ENCODE measurements at regions of chr7 and their contacts with region 1.

Region 1: DNA sequence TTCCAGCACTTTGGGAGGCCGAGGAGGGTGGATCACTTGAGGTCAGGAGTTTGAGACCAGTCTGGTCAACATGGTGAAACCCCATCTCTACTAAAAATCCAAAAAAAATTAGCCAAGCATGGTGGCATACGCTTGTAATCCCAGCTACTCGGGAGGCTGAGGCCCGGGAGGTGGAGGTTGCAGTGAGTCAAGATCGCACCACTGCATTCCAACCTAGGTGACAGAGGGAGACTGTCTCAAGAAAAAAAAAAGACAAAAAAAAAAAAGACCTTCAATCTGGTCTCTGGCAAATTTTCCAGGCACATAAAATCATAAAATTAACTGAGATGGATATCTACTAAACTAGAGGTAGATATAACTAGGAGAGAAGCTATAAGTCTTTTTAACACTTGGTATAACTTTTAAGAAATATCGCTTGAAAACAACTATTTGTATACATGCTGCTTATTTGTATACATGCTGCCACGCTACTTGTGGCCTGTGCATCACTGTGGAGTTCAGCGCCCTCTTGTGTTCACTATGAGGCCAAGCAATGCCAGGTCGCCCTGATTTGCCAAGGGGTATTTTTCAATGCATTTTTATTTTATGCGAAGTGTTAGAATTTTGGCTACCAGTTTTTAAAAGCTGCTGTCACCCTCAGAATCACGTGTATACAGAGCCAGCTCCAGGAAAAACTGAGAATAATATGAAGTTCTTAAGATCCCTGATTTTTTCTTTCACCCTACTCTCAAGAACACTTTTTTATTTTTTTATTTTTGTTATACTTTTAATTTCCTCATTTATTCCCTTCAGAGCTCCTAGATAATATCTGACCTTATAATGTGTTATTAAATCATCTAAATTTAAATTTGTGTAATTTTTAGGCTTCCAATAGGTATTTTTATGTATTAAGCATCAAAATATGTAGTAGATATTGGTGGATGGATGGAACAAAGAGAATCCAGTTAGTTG is 26.7 kb downstream of the CYCS start:
- DNase-seq: peak; percentile 39
- H3K4me3 ChIP-seq: no peak overlapping the region
- H3K27ac ChIP-seq: no peak overlapping the region
- H3K27me3 ChIP-seq: peaks cover 3% of the 10 kb centered on the region
- CTCF ChIP-seq: peak; percentile 93

Region 2: DNA sequence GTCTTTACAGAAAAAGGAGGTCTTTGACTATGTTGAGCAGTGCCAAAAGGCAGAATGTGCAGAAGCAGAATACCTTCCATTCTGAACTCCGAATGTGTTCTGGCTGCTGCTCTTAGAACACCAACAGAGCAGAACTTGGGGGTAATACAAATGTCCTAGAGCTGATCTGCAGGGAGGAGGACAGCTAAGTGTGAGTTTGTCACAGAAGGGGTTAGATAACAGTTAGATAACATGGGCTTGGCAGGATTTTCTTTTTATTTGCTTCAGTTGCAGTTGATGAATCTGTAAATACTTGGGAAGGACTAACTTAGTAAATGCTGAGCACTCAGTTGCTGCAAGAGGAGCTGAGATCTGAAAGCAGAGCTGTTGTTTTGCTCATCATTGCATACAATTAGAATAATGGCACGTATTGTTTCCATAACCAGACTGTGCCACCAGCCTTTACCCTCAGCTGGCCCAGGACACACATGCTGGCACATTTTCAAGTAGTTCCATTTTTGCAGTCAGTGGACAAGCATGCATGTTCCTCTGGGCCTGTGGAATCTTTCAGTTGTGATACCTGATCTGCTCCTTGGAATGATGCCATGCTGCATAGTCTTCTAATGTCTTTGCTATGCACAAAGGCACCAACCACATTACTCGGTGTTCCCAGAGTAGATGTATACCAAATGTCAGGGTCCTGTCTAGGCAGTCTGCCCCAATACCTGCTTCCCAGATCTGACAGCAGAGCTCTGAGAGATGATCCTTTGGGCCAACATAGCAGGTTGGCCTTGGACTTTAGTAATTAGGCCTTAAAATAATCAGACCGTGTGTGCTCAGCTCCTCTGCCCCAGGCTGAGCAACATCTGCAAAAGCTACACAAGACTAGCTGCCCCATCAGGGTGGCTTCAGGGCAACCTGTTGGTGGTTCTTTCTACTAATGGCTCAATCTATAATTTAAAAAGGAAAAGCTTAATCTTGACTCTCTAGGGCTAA is 396.8 kb before region 1 on chr7:
- CTCF ChIA-PET with region 1: interaction called, 15 read pairs
- POLR2A ChIA-PET with region 1: no interaction called
- DNase-seq: peak; percentile 92
- H3K4me3 ChIP-seq: no peak overlapping the region
- H3K27ac ChIP-seq: peak overlapping the region; percentile 66
- H3K27me3 ChIP-seq: no peaks in the 10 kb centered on the region
- CTCF ChIP-seq: no peak

Region 3: DNA sequence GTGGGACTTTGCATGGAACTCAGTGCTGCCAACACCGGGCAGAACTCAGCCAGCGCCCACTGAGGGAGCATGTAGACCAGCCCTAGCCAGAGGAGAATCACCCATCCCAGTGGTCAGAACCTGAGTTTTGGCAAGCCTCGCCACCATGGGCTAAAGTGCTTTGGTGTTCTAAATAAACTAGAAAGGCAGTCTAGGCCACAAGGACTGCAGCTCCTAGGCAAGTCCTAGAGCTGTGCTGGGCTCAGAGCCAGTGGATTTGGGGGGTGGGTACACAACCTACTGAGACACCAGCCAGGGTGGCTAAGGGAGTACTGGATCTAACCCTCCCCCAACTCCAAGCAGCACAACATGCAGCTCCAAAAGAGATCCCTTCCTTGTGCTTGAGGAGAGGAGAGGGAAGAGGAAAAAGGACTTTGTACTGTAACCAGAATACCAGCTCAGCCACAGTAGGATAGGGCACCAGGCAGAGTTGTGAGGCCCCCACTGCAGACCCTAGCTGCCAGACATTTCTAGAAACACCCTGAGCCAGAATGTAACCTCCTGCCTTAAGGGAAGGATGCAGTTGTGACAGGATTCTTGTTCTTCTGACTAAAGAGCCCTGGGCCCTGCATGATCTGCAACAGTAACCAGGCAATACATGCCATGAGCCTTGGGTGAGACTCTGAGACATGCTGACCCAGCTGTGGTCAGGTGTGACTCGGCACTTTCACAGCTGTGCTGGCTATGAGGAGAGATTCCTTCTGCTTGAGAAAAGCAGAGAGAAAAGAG is 365.5 kb before region 1 on chr7:
- CTCF ChIA-PET with region 1: interaction called, 13 read pairs
- POLR2A ChIA-PET with region 1: no interaction called
- DNase-seq: peak; percentile 72
- H3K4me3 ChIP-seq: no peak overlapping the region
- H3K27ac ChIP-seq: peak overlapping the region; percentile 77
- H3K27me3 ChIP-seq: no peaks in the 10 kb centered on the region
- CTCF ChIP-seq: no peak

Region 4: DNA sequence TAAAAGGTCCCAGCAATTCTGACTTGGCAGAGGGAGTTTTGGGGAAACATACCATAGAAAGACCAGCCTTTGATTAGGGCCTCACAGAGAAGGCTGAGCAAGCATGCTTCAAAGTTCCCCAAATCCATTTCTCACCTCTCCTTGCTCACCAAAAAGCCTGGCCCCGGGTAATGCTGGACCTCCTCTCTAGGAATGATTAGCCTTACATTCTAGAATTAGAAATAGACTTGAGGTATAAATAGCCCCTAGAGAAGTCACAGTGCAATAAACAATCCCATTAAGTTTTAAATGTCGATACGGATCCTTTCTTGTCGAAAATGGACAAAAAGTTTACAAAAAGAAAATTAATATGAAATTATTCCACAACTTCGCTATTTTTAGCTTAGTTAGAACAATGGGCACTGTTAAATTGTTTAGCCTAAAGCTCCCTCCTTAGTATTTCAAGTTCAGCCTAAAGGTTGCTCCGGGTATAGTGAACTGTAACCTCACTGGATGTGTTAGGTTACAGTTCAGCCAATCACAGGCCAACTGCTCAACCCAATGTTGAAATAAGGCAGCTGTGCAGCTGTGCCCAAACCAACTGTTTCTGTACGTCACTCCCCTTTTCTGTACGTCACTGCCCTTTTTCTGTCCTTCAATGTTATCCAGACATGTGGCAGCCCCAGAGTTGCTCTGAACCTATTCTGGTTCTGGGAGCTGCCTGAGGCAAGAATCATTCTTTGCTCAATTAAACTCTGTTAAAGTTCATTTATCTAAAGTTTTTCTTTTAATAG is 333.2 kb before region 1 on chr7:
- CTCF ChIA-PET with region 1: interaction called, 17 read pairs
- POLR2A ChIA-PET with region 1: no interaction called
- DNase-seq: no peak
- H3K4me3 ChIP-seq: no peak overlapping the region
- H3K27ac ChIP-seq: no peak overlapping the region
- H3K27me3 ChIP-seq: no peaks in the 10 kb centered on the region
- CTCF ChIP-seq: no peak

Region 5: DNA sequence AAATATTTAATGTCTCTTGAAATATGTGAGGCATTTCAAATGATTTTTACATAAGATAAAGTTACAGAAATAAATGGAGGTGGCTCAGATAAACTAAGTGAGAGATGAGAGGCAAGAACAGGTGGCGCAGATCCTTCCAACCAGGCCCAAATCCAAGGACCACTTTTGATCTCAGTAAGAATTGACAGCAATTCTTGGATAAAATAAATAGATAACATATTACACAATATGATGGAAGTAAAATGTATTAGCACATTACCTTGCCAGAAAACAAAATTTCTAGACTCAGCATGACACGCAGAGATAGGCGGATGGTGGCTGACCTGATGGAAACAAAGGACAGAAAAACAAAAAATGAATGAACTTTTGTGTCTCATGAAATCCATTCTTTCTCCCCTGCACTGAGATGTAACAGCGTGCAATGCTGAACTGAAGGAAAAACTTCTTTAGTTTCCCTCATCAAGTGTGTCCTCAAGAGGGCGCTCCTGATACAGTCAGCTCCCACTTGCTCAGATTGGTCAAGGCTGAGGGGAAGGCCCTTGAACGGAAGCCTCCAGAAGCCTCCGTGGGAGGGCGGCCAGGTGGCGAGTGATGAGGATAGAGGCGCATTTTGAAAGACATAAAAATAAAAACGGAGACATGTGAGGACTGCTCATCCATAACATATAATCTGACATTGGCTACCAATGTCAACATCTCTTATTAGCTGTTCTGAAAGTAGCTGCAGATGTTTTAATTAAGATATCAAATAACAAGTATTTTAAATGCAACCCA is 278.3 kb before region 1 on chr7:
- CTCF ChIA-PET with region 1: interaction called, 328 read pairs
- POLR2A ChIA-PET with region 1: interaction called, 3 read pairs
- DNase-seq: peak; percentile 75
- H3K4me3 ChIP-seq: no peak overlapping the region
- H3K27ac ChIP-seq: peak overlapping the region; percentile 35
- H3K27me3 ChIP-seq: no peaks in the 10 kb centered on the region
- CTCF ChIP-seq: peak; percentile 94

Region 6: GRCh38 chr7:24979863-24980533 is 118.4 kb before region 1 on chr7 and contains the start of gene OSBPL3:
- CTCF ChIA-PET with region 1: interaction called, 24 read pairs
- POLR2A ChIA-PET with region 1: no interaction called
- DNase-seq: peak; percentile 91
- H3K4me3 ChIP-seq: peak within 1 kb of the TSS; percentile 79
- H3K27ac ChIP-seq: peak within 1 kb of the TSS; percentile 91
- H3K27me3 ChIP-seq: no peaks in the 10 kb centered on the region
- CTCF ChIP-seq: no peak
- polyA plus RNA-seq, gene OSBPL3: 33.3 and 37.8 TPM in 2 replicates

Region 7: GRCh38 chr7:25125137-25125946 is 27.0 kb after region 1 on chr7 and contains the start of gene CYCS:
- CTCF ChIA-PET with region 1: interaction called, 13 read pairs
- POLR2A ChIA-PET with region 1: no interaction called
- DNase-seq: peak; percentile 100
- H3K4me3 ChIP-seq: peak within 1 kb of the TSS; percentile 98
- H3K27ac ChIP-seq: peak within 1 kb of the TSS; percentile 77
- H3K27me3 ChIP-seq: peaks cover 3% of the 10 kb centered on the region
- CTCF ChIP-seq: no peak
- polyA plus RNA-seq, gene CYCS: 63.1 and 74.1 TPM in 2 replicates

Region 8: DNA sequence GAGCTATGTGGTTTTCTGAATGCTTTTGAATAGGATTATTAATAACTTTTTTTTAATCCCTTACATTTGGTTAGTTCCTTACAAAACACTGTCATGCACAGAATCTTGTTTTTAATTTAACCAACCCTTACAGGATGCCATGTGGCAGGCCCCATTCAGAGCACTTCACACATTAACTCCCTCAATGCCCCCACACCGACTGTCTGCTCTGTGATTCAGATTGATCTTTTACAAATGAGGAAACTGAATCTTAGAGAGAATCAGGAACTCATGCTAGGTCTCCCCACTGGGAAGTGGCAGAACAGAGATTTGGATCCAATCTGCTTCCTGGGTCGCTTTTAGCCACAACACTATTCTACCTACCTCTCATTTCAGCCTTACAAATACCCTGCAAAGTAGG is 325.7 kb after region 1 on chr7:
- CTCF ChIA-PET with region 1: no interaction called
- POLR2A ChIA-PET with region 1: no interaction called
- DNase-seq: no peak
- H3K4me3 ChIP-seq: no peak overlapping the region
- H3K27ac ChIP-seq: no peak overlapping the region
- H3K27me3 ChIP-seq: no peaks in the 10 kb centered on the region
- CTCF ChIP-seq: no peak

Measured in AG04450 (cell line).